Left cardiac atrium (tissue), 4 donors: ENCODE measurements at regions of chr9 and their contacts with region 1.

Region 1: GRCh38 chr9:19184144-19184917 is 46.2 kb upstream of the DENND4C start:
- DNase-seq: peak; percentile 80
- ATAC-seq: peak; percentile 85 to 93

Region 2: DNA sequence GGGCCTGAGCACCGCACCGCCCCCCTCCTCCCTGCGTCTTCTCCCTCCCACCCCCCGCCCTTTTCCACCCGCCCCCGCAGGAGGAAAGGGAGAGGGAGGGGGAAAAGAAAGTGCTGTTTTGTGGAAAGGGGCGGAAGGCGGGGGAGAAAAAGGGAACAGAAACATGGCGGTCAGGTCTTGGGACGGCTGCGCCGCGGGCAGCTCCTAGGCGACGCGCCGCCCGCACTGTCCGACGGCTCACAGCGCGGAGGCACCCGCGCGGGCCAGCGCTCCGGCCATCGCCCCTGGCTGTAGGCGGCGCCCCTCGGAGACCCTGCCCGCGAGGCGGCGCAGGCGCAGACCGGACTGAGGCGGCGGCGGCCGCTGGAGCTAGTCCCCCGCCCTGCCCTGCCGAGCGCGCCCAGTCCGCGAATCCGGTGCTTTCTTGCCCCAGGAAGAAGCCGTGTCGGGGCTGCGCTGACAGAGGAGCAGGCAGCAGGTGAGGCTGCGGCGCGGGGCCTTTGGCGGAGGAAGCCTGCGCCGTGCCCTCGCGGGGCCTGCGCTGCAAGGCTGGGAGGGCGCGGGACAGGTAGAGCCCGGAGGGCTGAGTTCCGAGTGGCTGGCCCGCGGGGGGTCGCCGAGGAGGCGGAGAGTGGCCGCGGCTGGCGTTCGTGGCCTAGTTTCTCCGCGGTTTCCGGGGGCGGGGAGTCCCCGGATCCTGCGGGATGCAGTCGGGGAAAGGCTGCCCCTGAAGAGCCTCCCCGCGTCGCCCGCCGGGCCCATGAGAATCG is 46.2 kb after region 1 on chr9 and contains the start of gene DENND4C:
- intact Hi-C with region 1: loop called in 1 of 2 experiments (anchors 5 kb)
- DNase-seq: peak; percentile 91
- ATAC-seq: peak; percentile 90 to 94
- total RNA-seq, gene DENND4C: 35.3 to 45.3 TPM